A549 (cell line): ENCODE measurements at regions of chr11 and their contacts with region 1.

Region 1: GRCh38 chr11:75233742-75234172 is 6.8 kb upstream of the TPBGL start:
- DNase-seq: peak in 1 of 2 experiments; percentile 46
- ATAC-seq: peak; percentile 30 to 46; a peak in 1 of 6 replicates
- H3K4me3 ChIP-seq: no peak overlapping the region
- H3K27ac ChIP-seq: no peak overlapping the region
- H3K4me1 ChIP-seq: no peaks in the 10 kb centered on the region
- CTCF ChIP-seq: no peak
- EP300 ChIP-seq: no peak
- POLR2A ChIP-seq: no peak
- RAD21 ChIP-seq: no peak

Region 2: GRCh38 chr11:75214411-75214821 is 19.3 kb before region 1 on chr11:
- CTCF ChIA-PET with region 1: interaction called, 43 read pairs
- POLR2A ChIA-PET with region 1: no interaction called
- DNase-seq: peak; percentile 79 to 80
- ATAC-seq: peak; percentile 87 to 98
- H3K4me3 ChIP-seq: no peak overlapping the region
- H3K27ac ChIP-seq: no peak overlapping the region
- H3K4me1 ChIP-seq: no peaks in the 10 kb centered on the region
- CTCF ChIP-seq: peak; percentile 15; the same call in 1 of the 3 replicates
- EP300 ChIP-seq: no peak
- POLR2A ChIP-seq: no peak
- RAD21 ChIP-seq: peak in 1 of 2 experiments; percentile 21; a peak in 1 of 5 replicates